Activated B cell treated with CpG ODN at 0.5 μM for 24 hours (primary cell): ENCODE measurements at regions of chr7 and their contacts with region 1.

Region 1: DNA sequence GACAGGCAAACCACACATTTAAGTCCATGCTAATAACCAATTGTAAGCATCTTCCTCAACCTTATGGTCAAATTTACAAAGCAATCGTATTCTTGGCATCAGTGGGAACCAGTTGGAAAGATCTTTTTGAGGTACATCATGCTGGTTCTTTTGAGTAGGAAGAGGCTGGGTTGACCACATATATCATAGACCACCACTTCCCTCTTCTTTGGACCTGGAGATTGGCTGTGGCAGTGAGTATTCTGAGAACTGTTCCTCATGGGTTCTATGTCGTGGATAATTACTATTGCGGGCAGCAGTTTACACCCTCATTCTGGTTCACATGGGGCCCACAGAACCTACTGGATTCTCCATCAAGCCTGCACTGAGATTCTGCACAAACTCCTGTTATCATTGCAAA is 35.5 kb upstream of the C1GALT1 start:
- DNase-seq: no peak
- ATAC-seq: no peak
- H3K4me3 Mint-ChIP-seq: no peak overlapping the region
- H3K27ac Mint-ChIP-seq: no peak overlapping the region
- H3K4me1 Mint-ChIP-seq: peaks cover 6% of the 10 kb centered on the region
- H3K27me3 Mint-ChIP-seq: no peaks in the 10 kb centered on the region
- CTCF ChIP-seq: no peak

Region 2: GRCh38 chr7:6718124-6718523 is 428.7 kb before region 1 on chr7:
- CTCF ChIA-PET with region 1: no interaction called
- POLR2A ChIA-PET with region 1: no interaction called
- intact Hi-C with region 1: no loop called
- DNase-seq: no peak
- ATAC-seq: no peak
- H3K4me3 Mint-ChIP-seq: no peak overlapping the region
- H3K27ac Mint-ChIP-seq: no peak overlapping the region
- H3K4me1 Mint-ChIP-seq: peaks cover 4% of the 10 kb centered on the region
- H3K27me3 Mint-ChIP-seq: peaks cover 12% of the 10 kb centered on the region
- CTCF ChIP-seq: no peak

Region 3: DNA sequence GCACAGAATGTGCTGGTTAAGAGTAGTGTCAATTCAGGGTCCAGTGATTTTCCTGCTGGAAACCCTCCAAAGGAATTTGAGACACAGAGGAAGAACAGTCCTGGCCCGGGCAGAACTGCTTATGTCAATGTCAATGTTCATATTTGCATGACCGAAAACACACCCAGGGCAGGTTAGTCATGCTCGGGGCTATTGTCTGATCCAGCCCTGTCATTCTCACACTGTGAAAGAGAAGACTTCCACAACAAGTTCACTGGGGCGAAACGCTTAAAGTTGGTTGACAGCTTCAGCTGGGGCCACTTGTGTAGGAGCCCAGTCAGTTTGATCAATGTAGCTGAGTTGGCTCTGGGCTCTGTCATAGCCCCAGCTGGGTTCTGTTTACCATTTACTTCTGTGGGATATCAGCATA is 174.9 kb after region 1 on chr7:
- CTCF ChIA-PET with region 1: no interaction called
- POLR2A ChIA-PET with region 1: interaction called, 10 read pairs
- intact Hi-C with region 1: no loop called
- DNase-seq: peak; percentile 18
- ATAC-seq: peak; percentile 95
- H3K4me3 Mint-ChIP-seq: no peak overlapping the region
- H3K27ac Mint-ChIP-seq: peak overlapping the region; percentile 33
- H3K4me1 Mint-ChIP-seq: peaks cover 27% of the 10 kb centered on the region
- H3K27me3 Mint-ChIP-seq: no peaks in the 10 kb centered on the region
- CTCF ChIP-seq: no peak